H1 (cell line): ENCODE measurements at regions of chr11 and their contacts with region 1.

Region 1: DNA sequence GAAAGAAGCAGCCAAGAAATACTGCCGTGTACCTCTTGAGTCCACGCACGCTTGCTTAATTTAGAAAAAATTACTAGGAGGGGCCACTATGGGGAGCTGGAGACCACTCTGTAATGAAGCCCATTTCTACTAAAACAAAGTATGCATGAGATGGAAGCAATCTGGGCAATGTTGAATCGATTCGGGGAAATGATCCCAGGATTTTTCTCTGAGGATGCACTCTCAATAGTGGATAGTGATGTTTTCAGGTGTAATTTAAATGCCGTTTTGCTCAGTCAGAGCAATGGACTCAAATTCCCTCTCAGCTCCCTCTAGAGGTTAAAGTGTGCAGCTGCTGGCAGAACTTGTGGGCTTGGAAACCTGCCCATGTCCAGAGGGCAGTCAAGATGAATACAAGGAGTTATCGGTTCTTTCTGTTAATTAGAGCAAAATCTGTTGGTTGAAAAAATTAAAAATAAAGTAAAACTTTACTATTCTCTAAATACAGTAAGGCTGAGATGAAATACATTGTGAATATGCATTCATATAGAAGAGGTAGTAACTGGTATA is 64.1 kb downstream of the ME3 start:
- DNase-seq: peak in 1 of 2 experiments; percentile 53
- H3K4me3 ChIP-seq: no peak overlapping the region
- H3K27ac ChIP-seq: no peak overlapping the region
- H3K4me1 ChIP-seq: peaks cover 0 to 12% (median 4%) of the 10 kb centered on the region in 4 experiments; a peak in 4 of 7 replicates
- H3K27me3 ChIP-seq: no peaks in the 10 kb centered on the region
- CTCF ChIP-seq: peak; percentile 63 to 88 (median 83)
- EP300 ChIP-seq: no peak
- POLR2A ChIP-seq: no peak
- RAD21 ChIP-seq: peak; percentile 50 to 52

Region 2: GRCh38 chr11:86456052-86456939 is 152.0 kb before region 1 on chr11:
- CTCF ChIA-PET with region 1: interaction called, 60 read pairs
- POLR2A ChIA-PET with region 1: no interaction called
- DNase-seq: peak; percentile 75 to 93
- H3K4me3 ChIP-seq: no peak overlapping the region
- H3K27ac ChIP-seq: no peak overlapping the region
- H3K4me1 ChIP-seq: peaks cover 0 to 4% (median 0%) of the 10 kb centered on the region in 4 experiments; a peak in 1 of 7 replicates
- H3K27me3 ChIP-seq: no peaks in the 10 kb centered on the region
- CTCF ChIP-seq: peak; percentile 68 to 93 (median 88)
- EP300 ChIP-seq: peak in 1 of 2 experiments; percentile 15; a peak in 1 of 3 replicates
- POLR2A ChIP-seq: no peak
- RAD21 ChIP-seq: peak; percentile 98

Region 3: DNA sequence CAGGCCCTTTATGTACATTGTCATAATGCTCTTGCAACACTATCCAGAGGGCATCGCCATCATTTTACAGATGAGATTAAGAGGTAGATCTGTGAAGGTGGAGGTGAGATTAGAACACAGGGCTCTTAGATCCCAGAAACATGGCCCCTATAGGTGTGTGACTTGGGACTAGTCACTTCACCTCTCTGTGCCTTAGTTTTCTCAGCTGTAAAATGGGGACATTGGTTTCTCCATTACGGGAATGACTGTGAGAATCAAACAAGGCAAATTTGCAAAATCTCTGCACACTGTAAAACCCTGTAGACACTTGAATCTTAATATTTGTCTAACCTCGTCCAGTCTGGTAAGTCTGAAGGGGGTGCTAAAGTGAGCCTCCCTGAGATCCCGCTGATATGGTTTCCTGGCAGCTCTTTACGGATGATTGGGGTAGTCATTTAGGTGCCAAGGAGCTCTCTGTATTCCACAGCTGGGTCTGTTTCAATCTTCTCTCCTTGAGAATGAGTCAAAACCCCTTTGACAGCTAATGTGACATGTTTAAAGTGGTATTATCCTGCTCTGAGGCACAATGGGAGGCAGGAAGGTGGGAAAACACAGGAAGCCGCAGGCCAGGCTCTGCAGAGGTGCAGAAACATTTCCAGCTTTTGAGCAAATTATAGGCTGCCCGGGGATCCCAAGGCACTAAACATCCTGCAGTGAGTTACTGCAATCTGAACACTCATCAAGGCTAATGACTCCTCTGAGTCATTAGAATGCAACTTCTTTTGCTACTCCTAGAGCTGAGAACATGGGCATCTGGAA is 92.8 kb before region 1 on chr11:
- CTCF ChIA-PET with region 1: interaction called, 17 read pairs
- POLR2A ChIA-PET with region 1: no interaction called
- DNase-seq: no peak
- H3K4me3 ChIP-seq: no peak overlapping the region
- H3K27ac ChIP-seq: no peak overlapping the region
- H3K4me1 ChIP-seq: peaks cover 0 to 4% (median 0%) of the 10 kb centered on the region in 4 experiments; a peak in 2 of 7 replicates
- H3K27me3 ChIP-seq: no peaks in the 10 kb centered on the region; a peak in 2 of 7 replicates
- CTCF ChIP-seq: no peak
- EP300 ChIP-seq: no peak
- POLR2A ChIP-seq: no peak
- RAD21 ChIP-seq: no peak

Region 4: DNA sequence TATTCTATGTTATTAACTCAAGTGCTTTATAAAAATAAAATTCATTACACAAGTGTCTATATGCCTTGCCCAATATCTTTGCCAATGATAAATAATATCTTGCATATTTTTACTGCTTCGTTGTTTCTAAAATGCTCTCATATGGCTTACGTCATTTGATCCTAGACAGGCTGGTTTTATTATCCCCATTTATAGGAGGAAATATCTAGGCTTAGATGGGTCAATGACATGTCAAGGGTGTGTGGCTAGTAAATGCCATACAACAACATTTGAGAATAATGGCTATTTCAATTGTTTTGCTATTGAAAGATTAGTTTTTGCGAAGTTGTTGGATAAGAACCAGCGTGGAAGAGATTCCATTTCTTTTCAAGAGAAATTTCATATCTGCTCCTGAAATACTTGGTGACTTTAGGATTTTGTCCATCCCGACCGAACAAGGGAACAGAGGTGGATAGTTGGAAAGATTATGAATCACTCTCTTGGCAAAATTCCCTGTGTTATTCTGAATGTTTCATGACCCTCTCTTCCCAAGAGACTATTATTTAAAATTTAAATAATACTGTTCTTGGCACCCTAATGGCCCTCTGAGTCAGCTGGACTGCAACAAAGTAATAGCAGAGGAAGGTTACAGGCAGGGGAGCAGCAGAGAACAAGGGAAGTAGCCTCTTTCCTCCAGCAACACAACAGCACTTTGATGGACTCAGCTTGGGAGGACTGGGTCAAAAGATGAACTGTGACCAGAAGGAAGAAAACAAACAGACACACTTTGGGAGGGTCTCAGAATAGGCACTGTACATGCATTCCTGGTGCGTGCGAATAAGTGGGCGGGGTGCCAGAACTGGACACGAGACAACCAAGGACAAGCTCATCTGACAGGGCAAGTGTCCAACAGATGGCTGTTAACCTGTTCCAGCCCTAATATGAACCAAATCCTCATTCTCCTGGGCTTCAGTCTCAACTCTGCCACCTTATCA is 30.4 kb before region 1 on chr11:
- CTCF ChIA-PET with region 1: interaction called, 27 read pairs
- POLR2A ChIA-PET with region 1: no interaction called
- DNase-seq: no peak
- H3K4me3 ChIP-seq: no peak overlapping the region
- H3K27ac ChIP-seq: no peak overlapping the region
- H3K4me1 ChIP-seq: no peaks in the 10 kb centered on the region
- H3K27me3 ChIP-seq: no peaks in the 10 kb centered on the region
- CTCF ChIP-seq: no peak
- EP300 ChIP-seq: no peak
- POLR2A ChIP-seq: no peak
- RAD21 ChIP-seq: no peak

Region 5: DNA sequence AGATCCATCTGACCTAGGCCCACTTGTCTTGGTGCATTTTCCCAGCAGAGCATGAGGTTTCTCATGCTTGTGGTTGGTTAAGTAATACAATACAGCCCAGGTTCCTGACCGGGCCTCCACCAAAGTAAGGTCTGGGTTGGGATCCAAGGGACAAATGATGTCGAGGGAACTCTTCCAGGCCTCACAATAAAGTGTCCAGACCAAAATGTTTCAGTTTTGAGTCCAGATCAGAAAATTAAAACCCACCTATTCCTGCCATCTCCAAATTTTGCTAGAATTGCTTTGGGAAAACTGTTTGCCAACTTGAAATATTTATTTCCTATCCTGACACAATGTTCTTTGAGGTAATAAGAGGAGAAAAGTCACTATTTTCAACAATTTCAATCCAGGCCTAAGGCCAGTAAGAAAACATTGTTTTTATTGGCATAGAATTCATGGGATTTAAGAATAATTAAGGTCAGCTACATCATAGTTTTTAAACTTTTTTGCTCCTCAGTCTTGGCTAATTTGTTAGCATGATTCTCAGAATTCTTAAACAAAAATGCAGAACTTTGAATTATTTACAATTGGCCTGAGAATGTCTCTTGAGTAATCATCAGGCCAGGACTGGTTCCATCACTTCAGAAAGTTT is 12.7 kb after region 1 on chr11:
- CTCF ChIA-PET with region 1: interaction called, 54 read pairs
- POLR2A ChIA-PET with region 1: no interaction called
- DNase-seq: no peak
- H3K4me3 ChIP-seq: no peak overlapping the region
- H3K27ac ChIP-seq: no peak overlapping the region
- H3K4me1 ChIP-seq: peaks cover 0 to 3% (median 1%) of the 10 kb centered on the region in 4 experiments; a peak in 2 of 7 replicates
- H3K27me3 ChIP-seq: no peaks in the 10 kb centered on the region
- CTCF ChIP-seq: no peak
- EP300 ChIP-seq: no peak
- POLR2A ChIP-seq: no peak
- RAD21 ChIP-seq: no peak

Region 6: GRCh38 chr11:86664930-86665329 is 56.6 kb after region 1 on chr11:
- CTCF ChIA-PET with region 1: interaction called, 11 read pairs
- POLR2A ChIA-PET with region 1: no interaction called
- DNase-seq: no peak
- H3K4me3 ChIP-seq: no peak overlapping the region
- H3K27ac ChIP-seq: no peak overlapping the region
- H3K4me1 ChIP-seq: no peaks in the 10 kb centered on the region
- H3K27me3 ChIP-seq: no peaks in the 10 kb centered on the region
- CTCF ChIP-seq: no peak
- EP300 ChIP-seq: no peak
- POLR2A ChIP-seq: no peak
- RAD21 ChIP-seq: no peak

Region 7: DNA sequence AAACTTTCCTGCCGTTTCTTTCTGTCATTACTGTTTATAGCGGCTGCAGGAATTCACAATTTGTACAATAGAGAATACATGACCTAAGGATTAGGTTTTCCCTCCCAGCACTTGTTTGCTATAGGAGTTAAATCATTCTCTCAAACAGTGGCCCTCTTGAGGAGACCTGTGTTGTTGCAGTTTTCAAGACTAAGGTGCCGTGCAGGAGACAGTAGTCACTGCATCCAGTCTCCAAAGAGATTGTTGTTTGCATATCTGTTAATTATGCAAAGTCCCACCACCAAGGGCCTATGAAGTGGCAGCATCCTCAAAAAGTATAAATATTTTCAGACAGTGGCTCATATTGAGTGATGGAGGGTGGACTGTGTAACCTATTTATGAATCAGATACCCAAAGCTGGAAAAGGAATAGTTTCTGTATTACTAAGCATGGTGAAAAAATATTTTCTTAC is 194.3 kb after region 1 on chr11:
- CTCF ChIA-PET with region 1: interaction called, 21 read pairs
- POLR2A ChIA-PET with region 1: no interaction called
- DNase-seq: no peak
- H3K4me3 ChIP-seq: no peak overlapping the region
- H3K27ac ChIP-seq: no peak overlapping the region
- H3K4me1 ChIP-seq: peaks cover 0 to 10% (median 7%) of the 10 kb centered on the region in 4 experiments; a peak in 5 of 7 replicates
- H3K27me3 ChIP-seq: peaks cover 0 to 16% (median 13%) of the 10 kb centered on the region in 4 experiments; a peak in 4 of 7 replicates
- CTCF ChIP-seq: peak in 2 of 3 experiments; percentile 33 to 63; a peak in 3 of 4 replicates
- EP300 ChIP-seq: no peak
- POLR2A ChIP-seq: no peak
- RAD21 ChIP-seq: peak; percentile 20 to 45; a peak in 2 of 4 replicates